Astrocyte of the spinal cord (primary cell): ENCODE measurements at regions of chr11 and their contacts with region 1.

Region 1: GRCh38 chr11:8087185-8087584 is 6.2 kb downstream of the TUB start:
- DNase-seq: no peak
- H3K4me3 ChIP-seq: no peak overlapping the region
- CTCF ChIP-seq: peak; percentile 28

Region 2: DNA sequence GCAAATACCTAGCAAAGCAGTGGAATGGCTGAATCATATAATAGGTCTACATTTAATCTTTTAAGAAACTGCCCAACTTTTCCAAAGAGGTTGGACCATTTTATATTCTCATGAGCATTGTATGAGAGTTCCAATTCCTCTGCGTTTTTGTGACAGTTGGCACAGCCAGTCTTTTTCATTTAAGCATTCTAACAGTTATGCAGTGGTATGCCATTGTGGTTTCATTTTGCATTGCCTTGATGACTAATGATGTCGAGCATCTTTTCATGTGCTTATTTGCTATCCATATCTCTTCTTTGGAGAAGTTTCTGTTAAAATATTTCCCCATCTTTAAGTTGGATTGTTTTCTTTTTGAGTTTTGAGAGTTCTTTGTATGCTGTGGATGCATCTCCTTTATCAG is 61.4 kb before region 1 on chr11:
- in situ Hi-C with region 1: loop called (anchors 5 kb)
- DNase-seq: peak; percentile 66
- H3K4me3 ChIP-seq: no peak overlapping the region
- CTCF ChIP-seq: no peak